Activated CD8-positive, alpha-beta T cell treated with anti-CD3 and anti-CD28 coated beads, Interleukin-2, amount 10 ng/mL, durations not matched to agents 7 days and 5 days (primary cell): ENCODE measurements at regions of chr1 and their contacts with region 1.

Region 1: GRCh38 chr1:160681067-160681890 is 30.3 kb downstream of the CD48 start:
- DNase-seq: peak; percentile 93
- ATAC-seq: peak; percentile 78
- H3K4me3 Mint-ChIP-seq: no peak overlapping the region
- H3K27ac Mint-ChIP-seq: peak overlapping the region; percentile 88
- H3K4me1 Mint-ChIP-seq: peaks cover 85% of the 10 kb centered on the region
- H3K27me3 Mint-ChIP-seq: no peaks in the 10 kb centered on the region

Region 2: DNA sequence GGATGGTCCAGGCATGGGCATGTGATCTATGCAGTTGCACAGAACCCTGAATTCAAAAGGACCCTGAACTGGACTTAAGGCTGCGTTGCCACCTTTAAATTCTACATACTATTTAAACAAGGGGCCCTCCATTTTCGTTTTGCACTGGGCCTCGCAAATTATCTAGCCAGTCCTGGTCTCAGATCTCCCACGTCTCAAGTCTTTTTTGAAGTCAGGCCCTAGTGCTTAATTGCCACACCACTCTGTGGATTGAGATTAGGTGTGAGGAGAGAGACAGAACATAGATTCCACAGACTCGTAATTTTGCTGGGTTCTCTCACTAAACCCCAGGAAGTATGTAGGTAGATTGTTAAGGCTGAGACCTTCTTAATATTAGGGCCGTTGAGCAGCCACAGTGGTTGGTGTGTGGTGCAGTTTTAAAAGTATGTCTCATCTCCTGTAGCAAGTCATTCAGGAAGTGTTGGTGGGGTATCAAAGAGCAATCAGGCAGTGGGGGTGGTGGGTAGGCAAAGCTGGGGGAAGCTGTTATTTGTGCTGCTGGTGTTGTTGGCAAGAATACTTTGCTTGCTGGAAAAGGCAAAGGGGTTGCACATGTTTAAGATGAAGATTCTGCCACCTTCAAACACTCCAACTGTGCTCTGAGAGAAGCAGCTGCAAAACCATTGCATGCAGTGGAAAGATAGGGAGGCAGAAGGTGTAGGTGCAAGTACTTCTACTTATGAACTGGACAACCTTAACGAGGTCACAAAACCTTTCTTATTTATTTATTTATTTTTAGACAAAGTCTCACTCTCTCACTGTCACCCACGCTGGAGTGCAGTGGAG is 113.2 kb before region 1 on chr1:
- CTCF ChIA-PET with region 1: no interaction called
- POLR2A ChIA-PET with region 1: no interaction called
- DNase-seq: peak; percentile 80
- ATAC-seq: peak; percentile 85
- H3K4me3 Mint-ChIP-seq: peak overlapping the region; percentile 64
- H3K27ac Mint-ChIP-seq: peak overlapping the region; percentile 99
- H3K4me1 Mint-ChIP-seq: peaks cover 75% of the 10 kb centered on the region
- H3K27me3 Mint-ChIP-seq: no peaks in the 10 kb centered on the region

Region 3: GRCh38 chr1:160618763-160619274 is 62.5 kb before region 1 on chr1:
- CTCF ChIA-PET with region 1: interaction called, 84 read pairs
- POLR2A ChIA-PET with region 1: no interaction called
- DNase-seq: peak; percentile 61
- ATAC-seq: no peak
- H3K4me3 Mint-ChIP-seq: no peak overlapping the region
- H3K27ac Mint-ChIP-seq: peak overlapping the region; percentile 55
- H3K4me1 Mint-ChIP-seq: peaks cover 73% of the 10 kb centered on the region
- H3K27me3 Mint-ChIP-seq: no peaks in the 10 kb centered on the region

Region 4: GRCh38 chr1:160704250-160704649 is 23.0 kb after region 1 on chr1:
- CTCF ChIA-PET with region 1: interaction called, 71 read pairs
- POLR2A ChIA-PET with region 1: interaction called, 51 read pairs
- DNase-seq: no peak
- ATAC-seq: no peak
- H3K4me3 Mint-ChIP-seq: peak overlapping the region; percentile 51
- H3K27ac Mint-ChIP-seq: peak overlapping the region; percentile 68
- H3K4me1 Mint-ChIP-seq: peaks cover 66% of the 10 kb centered on the region
- H3K27me3 Mint-ChIP-seq: no peaks in the 10 kb centered on the region

Region 5: DNA sequence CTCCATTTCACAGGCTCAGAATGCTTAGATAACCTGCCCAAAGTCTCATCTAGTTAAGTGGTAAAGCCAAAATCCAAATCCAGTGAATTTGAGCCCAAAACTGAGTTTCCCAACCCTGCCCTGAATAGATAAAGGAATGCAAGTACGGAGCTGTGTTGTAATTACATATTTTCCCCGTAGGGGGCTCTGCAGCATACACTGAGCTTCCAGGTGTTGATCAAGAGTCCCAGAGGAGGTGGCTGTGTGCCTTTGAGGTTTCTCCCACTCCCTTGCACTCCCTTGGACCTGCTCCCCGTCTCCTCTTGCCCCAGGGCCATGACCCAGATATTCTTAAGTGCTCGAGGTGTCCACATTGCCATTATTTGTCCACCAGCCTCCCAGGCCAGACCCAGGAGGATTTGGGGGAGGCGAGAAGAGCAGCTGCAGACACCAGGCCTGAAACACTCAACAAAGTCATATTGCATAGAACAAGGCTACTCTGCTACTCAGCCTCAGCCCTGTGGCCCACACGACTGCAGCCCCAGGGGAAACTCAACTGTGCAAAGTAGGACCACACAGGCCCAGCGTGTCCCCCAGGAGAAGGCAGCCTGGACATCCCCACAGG is 96.3 kb after region 1 on chr1:
- CTCF ChIA-PET with region 1: interaction called, 24 read pairs
- POLR2A ChIA-PET with region 1: no interaction called
- DNase-seq: peak; percentile 66
- ATAC-seq: peak; percentile 76
- H3K4me3 Mint-ChIP-seq: no peak overlapping the region
- H3K27ac Mint-ChIP-seq: peak overlapping the region; percentile 26
- H3K4me1 Mint-ChIP-seq: peaks cover 40% of the 10 kb centered on the region
- H3K27me3 Mint-ChIP-seq: no peaks in the 10 kb centered on the region

Region 6: DNA sequence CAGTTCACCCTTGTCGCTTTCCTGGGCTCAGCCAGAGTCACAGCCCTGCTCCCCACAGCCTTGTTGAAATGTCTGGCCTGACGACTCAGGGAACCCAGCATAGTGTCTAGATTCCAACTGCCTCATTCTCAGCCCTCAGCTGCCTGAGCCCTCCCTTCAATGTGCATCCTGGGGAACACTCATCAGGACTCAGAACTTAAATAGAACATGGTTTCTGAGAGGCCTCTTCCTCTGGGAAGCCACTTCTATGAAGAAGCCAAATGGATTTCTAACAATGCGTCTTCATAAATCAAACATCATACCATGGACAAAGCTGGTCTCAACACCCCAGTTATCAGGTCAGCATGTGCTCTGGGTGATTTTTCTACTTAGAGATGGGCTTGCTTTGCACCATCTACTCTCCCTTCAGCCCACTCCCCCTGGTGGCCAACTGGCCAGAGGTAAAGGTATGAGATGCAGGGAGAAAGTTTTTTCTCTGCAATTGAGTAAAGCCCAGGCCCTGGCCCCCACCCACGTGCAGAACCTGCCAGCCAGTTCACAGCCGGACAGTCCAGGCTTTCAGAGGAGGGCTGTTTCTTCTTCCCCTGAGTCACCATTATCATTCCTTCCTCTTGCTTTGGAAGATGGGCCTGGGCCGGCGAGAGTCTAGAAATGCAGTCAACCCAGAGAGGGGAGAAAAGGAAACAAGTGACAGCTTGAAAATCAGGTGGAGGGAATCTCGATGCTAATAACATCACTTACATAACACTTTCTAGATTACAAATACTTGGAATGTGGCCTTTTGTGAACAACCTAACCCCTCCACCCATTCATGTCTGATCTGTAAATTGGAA is 149.3 kb after region 1 on chr1:
- CTCF ChIA-PET with region 1: interaction called, 26 read pairs
- POLR2A ChIA-PET with region 1: no interaction called
- DNase-seq: peak; percentile 87
- ATAC-seq: peak; percentile 83
- H3K4me3 Mint-ChIP-seq: no peak overlapping the region
- H3K27ac Mint-ChIP-seq: no peak overlapping the region
- H3K4me1 Mint-ChIP-seq: peaks cover 40% of the 10 kb centered on the region
- H3K27me3 Mint-ChIP-seq: no peaks in the 10 kb centered on the region